ENCODE measurements at regions of chr12 and their contacts with region 1.

Region 1: DNA sequence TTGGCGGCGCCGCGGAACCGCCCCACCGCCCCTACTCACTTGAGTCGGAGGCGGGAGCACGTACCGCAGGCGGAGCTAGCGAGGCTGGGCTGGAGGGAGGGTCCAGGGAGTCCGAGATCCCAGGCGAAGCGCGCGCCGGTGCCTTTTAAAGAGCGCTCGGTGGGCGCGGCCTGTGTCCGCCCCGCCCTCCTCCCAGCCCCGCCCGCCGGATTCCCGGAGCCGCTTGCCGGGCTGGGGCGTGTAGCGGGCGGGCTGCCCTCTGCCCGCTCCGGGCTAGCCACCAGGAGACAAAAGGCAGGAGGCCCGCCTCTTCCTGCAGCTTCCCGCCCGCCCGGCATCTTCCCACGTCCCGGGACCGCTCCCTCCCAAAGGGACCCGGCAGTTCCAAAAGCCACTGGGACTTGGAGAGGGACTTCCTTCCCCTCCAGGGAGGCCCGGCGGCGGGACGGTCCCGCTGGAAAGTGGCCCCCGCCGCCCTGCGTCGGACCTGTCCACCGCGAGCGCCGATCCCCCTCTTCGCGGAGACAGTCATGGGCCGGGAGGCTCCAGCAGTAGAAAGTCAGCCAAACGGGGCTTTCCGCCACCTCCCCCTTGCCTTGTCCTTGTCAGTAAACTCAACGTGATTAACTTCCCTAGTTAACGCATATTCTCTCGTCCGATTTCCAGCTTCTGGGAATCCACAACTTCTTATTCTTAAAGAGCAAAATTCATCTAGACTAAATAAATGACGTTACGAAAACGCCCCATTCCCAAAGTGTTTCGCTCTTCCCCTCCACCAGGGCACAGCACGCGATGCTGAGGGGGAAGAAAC is at the start of gene CSRP2:
- DNase-seq: no peak
- H3K4me3 ChIP-seq: peak within 1 kb of the TSS; percentile 82
- H3K27me3 ChIP-seq: no peaks in the 10 kb centered on the region
- CTCF ChIP-seq: peak; percentile 47; the same call in 1 of the 2 replicates
- polyA plus RNA-seq, gene CSRP2: 81.6 and 99.2 TPM in 2 replicates

Region 2: DNA sequence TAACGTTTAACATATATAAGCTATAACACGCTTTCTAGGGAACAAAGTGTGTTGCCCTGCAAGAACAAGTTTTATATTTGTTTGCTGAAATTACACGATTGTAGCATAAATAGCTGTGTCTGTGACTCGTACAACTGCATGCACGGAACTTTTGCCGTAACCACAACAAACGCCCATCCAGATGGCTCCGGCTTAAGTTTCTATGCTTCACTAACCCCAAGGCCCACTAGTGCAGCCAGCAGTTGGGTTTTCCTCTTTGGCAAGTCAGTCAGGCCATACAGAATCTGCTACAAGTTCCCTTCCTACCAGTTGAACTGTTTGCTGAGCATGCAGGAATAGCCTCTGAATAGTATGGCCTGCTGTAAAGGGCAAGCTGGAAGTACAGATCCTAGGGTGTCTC is 12.4 kb before region 1 on chr12:
- CTCF ChIA-PET with region 1: interaction called, 14 read pairs
- POLR2A ChIA-PET with region 1: interaction called, 4 read pairs
- DNase-seq: peak; percentile 68
- H3K4me3 ChIP-seq: no peak overlapping the region
- H3K27me3 ChIP-seq: no peaks in the 10 kb centered on the region
- CTCF ChIP-seq: no peak

Region 3: GRCh38 chr12:76898442-76898841 is 19.3 kb after region 1 on chr12:
- CTCF ChIA-PET with region 1: no interaction called
- POLR2A ChIA-PET with region 1: interaction called, 20 read pairs
- DNase-seq: no peak
- H3K4me3 ChIP-seq: no peak overlapping the region
- H3K27me3 ChIP-seq: no peaks in the 10 kb centered on the region; the same call in 1 of the 2 replicates
- CTCF ChIP-seq: no peak

Region 4: GRCh38 chr12:77010691-77011548 is 131.8 kb after region 1 on chr12:
- CTCF ChIA-PET with region 1: interaction called, 15 read pairs
- POLR2A ChIA-PET with region 1: no interaction called
- DNase-seq: peak; percentile 22
- H3K4me3 ChIP-seq: no peak overlapping the region
- H3K27me3 ChIP-seq: no peaks in the 10 kb centered on the region
- CTCF ChIP-seq: peak; percentile 98